A549 (cell line): ENCODE measurements at regions of chr20 and their contacts with region 1.

Region 1: DNA sequence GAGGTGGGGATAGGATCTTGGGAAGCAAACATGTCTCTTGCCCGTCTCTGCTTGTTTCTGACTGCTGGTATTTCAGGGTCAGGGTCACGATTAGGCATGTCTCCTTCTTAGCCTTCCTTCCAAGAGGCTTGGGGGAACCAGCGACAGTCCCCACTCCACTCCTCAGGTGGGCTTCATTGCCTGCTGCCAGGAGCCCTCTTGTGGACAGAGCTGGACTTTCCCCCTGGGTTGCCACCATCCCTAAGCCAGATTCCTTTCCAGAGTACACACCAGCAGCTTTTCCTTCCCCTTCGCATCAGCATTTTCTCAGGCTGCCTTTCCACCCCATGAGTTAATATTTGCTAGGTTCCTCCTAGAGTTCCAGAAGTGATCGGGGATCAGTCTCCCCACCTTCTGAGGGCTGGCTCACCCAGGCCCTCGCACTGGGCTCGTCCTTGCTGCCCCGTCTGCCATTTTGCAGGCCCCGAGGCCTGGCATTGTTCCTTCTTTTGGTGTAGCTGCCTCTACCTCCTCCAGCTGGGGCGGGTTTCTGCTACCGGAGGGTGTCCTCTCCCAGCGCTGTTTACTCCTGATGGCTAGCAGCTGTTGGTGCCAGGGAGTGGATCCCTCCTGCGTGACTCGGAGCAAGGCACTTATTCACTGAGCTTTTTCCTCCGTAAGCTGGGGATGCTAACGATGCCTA is 8.8 kb upstream of the C20orf144 start:
- DNase-seq: peak; percentile 72 to 73
- ATAC-seq: peak; percentile 82 to 87
- H3K4me3 ChIP-seq: no peak overlapping the region
- H3K27ac ChIP-seq: peak overlapping the region in 1 of 2 experiments; percentile 47; a peak in 2 of 6 replicates
- H3K4me1 ChIP-seq: peaks cover 4% of the 10 kb centered on the region; the same call in 1 of the 3 replicates
- CTCF ChIP-seq: peak; percentile 87
- EP300 ChIP-seq: no peak
- POLR2A ChIP-seq: no peak
- RAD21 ChIP-seq: peak; percentile 79 to 93

Region 2: GRCh38 chr20:33450867-33451266 is 202.5 kb before region 1 on chr20:
- CTCF ChIA-PET with region 1: interaction called, 20 read pairs
- POLR2A ChIA-PET with region 1: interaction called, 3 read pairs
- DNase-seq: peak in 1 of 2 experiments; percentile 13
- ATAC-seq: peak; percentile 31 to 43; a peak in 3 of 6 replicates
- H3K4me3 ChIP-seq: no peak overlapping the region
- H3K27ac ChIP-seq: no peak overlapping the region
- H3K4me1 ChIP-seq: no peaks in the 10 kb centered on the region
- CTCF ChIP-seq: no peak
- EP300 ChIP-seq: no peak
- POLR2A ChIP-seq: no peak
- RAD21 ChIP-seq: no peak

Region 3: GRCh38 chr20:33460711-33461110 is 192.6 kb before region 1 on chr20:
- CTCF ChIA-PET with region 1: interaction called, 20 read pairs
- POLR2A ChIA-PET with region 1: no interaction called
- DNase-seq: no peak
- ATAC-seq: no peak; a peak in 1 of 6 replicates
- H3K4me3 ChIP-seq: no peak overlapping the region
- H3K27ac ChIP-seq: no peak overlapping the region
- H3K4me1 ChIP-seq: no peaks in the 10 kb centered on the region
- CTCF ChIP-seq: no peak
- EP300 ChIP-seq: no peak
- POLR2A ChIP-seq: no peak
- RAD21 ChIP-seq: no peak

Region 4: DNA sequence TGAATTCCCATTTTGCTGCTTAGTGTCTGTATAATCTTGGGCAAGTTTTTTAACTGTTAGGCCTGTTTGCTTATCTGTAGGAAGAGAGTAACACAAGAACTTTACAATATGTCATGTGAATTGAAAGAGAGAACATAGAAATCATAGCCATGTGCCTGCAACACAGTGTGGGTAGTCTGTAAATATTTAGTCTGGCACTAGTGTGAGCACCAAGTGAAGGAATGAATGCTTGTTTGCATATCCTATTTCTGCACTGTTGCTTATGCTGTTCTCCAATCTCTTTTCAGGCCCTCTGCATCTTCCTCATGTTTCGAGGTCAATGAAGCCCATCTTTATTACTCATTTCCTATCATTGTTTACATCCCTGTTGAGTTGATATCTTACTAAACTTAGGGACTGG is 114.2 kb before region 1 on chr20:
- CTCF ChIA-PET with region 1: no interaction called
- POLR2A ChIA-PET with region 1: no interaction called
- DNase-seq: peak in 1 of 2 experiments; percentile 19
- ATAC-seq: peak in 1 of 2 experiments; percentile 56; a peak in 3 of 6 replicates
- H3K4me3 ChIP-seq: no peak overlapping the region
- H3K27ac ChIP-seq: 0 out of 6 replicates have a peak overlapping the region, but pooled peaks of 1 of the 2 experiments have one; percentile 3
- H3K4me1 ChIP-seq: peaks cover 13% of the 10 kb centered on the region
- CTCF ChIP-seq: no peak
- EP300 ChIP-seq: no peak
- POLR2A ChIP-seq: no peak
- RAD21 ChIP-seq: no peak

Region 5: GRCh38 chr20:33568868-33569801 is 84.2 kb before region 1 on chr20:
- CTCF ChIA-PET with region 1: no interaction called
- POLR2A ChIA-PET with region 1: no interaction called
- DNase-seq: no peak
- ATAC-seq: no peak
- H3K4me3 ChIP-seq: no peak overlapping the region
- H3K27ac ChIP-seq: no peak overlapping the region
- H3K4me1 ChIP-seq: peaks cover 10% of the 10 kb centered on the region
- CTCF ChIP-seq: no peak
- EP300 ChIP-seq: no peak
- POLR2A ChIP-seq: no peak
- RAD21 ChIP-seq: no peak

Region 6: GRCh38 chr20:33640297-33640696 is 13.1 kb before region 1 on chr20:
- CTCF ChIA-PET with region 1: interaction called, 21 read pairs
- POLR2A ChIA-PET with region 1: no interaction called
- DNase-seq: no peak
- ATAC-seq: no peak
- H3K4me3 ChIP-seq: no peak overlapping the region
- H3K27ac ChIP-seq: no peak overlapping the region
- H3K4me1 ChIP-seq: no peaks in the 10 kb centered on the region
- CTCF ChIP-seq: no peak
- EP300 ChIP-seq: no peak
- POLR2A ChIP-seq: no peak
- RAD21 ChIP-seq: no peak

Region 7: DNA sequence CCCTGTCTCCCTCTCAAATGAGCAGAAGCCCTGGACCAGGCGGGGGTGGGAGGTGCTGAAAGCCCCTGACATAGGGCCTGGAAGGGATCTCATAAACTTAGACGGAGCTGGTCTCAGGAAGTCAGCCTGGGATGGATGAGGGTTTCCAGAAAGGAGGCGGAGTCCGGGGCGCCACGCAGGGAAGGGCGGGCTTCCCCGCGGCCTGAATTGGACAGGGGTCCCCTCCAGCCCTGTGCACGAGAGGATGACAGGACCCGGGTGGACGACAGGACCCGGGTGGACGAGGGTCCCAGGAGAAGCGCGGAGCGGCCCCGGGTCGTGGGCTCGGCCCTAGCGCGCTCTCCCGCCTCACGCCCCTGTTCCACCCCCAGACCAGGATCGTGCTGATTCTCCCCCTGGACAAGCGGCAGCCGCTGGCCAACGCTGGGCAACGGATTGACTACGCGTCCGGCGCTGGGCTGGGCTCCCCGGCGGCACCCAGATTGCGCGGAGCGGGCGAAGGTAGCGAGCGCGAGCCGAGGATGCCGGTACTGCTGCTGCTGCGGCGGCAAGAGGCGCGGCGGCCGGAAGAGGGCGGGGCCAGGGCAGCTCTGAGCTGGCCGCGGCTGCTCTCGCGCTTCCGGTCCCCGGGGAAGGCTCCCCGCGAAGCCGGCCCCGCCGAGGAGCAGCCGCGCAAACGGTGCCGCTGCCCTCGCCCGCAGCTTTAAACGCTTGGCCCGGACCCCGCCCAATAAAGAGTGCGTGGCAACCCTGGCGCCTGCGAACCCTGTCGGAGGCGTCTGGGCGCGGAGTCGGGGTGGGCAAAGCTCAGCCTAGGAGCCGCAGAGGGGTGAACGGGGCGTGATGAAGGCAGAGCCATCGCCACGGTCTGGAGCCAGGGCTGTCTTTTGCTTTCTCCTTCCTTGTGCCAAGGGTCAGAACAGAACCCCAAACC is 10.1 kb after region 1 on chr20:
- CTCF ChIA-PET with region 1: interaction called, 28 read pairs
- POLR2A ChIA-PET with region 1: interaction called, 14 read pairs
- DNase-seq: peak; percentile 68 to 73
- ATAC-seq: peak; percentile 86 to 93
- H3K4me3 ChIP-seq: peak overlapping the region; percentile 68
- H3K27ac ChIP-seq: peak overlapping the region; percentile 83 to 95
- H3K4me1 ChIP-seq: peaks cover 15% of the 10 kb centered on the region
- CTCF ChIP-seq: no peak
- EP300 ChIP-seq: no peak
- POLR2A ChIP-seq: peak; percentile 78
- RAD21 ChIP-seq: no peak